Gastrocnemius medialis (tissue), 4 donors: ENCODE measurements at regions of chr17 and their contacts with region 1.

Region 1: DNA sequence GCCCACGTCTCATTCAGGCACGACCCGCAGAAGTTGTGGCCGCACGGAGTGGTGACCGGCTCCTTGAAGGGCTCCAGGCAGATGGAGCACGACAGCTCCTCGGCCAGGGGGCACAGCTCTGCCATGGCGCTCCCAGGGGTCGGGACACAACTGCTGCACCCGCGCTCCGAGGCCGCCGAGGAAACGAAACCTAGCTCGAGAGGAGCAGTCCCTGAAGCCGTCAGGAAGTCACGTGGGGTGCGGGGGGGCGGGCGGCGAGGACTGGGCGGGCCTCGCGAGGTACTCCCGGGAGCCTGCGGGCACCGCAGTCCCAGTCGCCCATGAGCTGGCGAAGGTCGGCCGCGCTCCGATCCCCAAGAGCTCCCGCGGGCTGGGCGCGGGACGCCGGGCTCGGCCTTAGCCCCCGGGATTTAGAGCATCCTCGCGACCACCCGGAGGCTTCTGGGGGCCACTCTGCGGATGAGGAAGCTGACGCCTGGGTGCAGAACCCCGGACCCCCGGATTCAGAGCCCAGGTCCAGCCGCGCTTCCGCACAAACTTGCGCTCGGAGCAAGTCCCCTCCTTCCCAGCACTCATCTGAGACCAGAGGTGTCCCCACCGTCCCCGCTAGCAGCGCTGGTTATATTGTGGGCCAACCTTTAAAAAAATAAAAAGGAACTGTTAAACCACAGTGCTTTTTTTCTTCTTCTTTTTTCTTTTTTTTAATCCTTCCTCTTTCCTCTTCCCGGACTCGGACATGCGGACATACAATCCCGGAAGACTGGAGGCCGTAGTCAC is at the start of gene TRIM25:
- DNase-seq: peak; percentile 92 to 93
- ATAC-seq: peak; percentile 78 to 84
- H3K4me3 ChIP-seq: peak within 1 kb of the TSS; percentile 68 to 87 (median 74)
- H3K27ac ChIP-seq: peak within 1 kb of the TSS; percentile 85 to 95 (median 87)
- H3K4me1 ChIP-seq: peaks cover 53 to 54% of the 10 kb centered on the region in 2 donors
- H3K27me3 ChIP-seq: no peaks in the 10 kb centered on the region
- CTCF ChIP-seq: no peak
- POLR2A ChIP-seq: peak; percentile 98 to 99
- total RNA-seq, gene TRIM25: 8.5 to 18.2 (median 15.1) TPM

Region 2: DNA sequence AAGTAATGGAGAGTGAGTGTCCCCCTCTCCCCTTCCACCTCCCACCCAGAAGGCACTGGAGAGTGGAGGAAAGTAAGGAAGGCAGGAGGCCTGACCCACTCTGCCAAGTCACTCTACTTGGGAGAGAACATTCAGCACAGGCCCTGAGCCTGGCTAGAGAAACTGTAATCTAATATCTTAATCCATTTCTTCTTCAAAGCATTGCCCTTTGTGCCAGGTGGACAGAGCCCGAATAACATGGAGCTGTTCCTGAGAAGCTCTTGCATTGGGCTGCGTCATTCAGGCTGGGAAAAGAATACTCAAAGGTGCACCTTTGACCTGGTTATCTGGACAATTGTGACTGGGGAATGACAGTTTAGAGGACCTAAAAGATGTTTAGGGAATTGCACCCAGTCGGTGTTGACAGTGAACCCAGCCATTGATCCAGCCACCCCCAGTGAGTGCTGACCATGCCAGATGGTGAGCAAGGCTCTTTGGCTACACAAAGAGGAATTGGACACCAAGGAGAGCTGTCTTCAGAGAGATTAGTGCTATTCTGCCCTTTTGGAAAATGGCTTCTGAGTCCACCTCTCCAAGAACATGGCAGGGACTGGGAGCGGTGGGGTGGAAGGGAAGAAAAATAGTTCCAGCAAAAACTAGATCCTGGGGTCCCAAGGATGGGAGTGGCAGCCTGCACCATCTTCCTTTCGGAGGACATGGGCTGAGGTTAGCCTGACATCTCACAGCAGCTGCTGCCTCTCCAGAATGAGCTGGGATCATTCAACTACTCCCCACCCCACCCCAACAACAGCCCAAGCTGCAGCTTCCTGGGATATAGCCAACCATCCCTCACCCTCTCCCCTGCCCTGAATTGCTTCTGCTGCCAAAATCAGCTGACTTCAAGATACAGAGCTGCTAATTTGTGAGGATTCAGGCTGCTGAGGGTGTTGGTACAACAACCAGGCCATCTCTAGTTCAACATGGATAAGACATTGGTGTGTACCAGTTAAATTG is 332.1 kb before region 1 on chr17:
- in situ Hi-C with region 1: no loop called
- intact Hi-C with region 1: no loop called
- DNase-seq: peak; percentile 67 to 80
- ATAC-seq: peak; percentile 89 to 93
- H3K4me3 ChIP-seq: no peak overlapping the region
- H3K27ac ChIP-seq: peak overlapping the region; percentile 83 to 92 (median 86)
- H3K4me1 ChIP-seq: peaks cover 40 to 53% of the 10 kb centered on the region in 2 donors
- H3K27me3 ChIP-seq: no peaks in the 10 kb centered on the region
- CTCF ChIP-seq: no peak
- POLR2A ChIP-seq: no peak

Region 3: DNA sequence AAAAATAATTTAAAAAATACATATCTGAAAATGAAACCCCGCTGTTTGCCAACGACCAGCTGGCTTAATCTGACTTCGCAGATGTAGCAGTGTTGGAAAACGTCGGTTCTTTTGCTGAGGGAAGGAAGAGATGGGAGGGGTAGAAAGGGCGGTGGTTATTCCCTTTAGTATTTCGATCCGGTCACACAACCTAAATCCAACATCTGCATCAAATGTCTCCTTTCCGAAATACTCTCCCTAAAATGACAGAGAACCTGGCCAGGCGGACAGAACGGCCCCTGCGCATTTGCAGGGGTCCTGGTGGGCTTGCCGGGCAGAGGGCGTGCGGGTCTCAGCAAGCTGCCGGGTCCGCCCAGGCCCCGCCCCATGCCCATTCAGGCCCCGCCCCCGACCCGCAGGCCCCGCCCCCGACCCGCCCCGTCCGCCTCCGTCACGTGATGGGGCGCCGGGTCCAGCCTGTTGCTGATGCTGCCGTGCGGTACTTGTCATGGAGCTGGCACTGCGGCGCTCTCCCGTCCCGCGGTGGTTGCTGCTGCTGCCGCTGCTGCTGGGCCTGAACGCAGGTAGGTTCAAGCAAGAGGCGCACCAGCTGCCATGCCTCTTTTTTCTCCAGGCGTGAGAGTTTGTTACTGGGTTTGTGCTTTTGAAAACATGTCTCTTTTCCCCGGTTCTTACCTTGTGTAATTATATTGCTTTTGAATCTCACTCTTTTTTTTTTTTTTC is 63.8 kb after region 1 on chr17 and contains the start of gene SCPEP1:
- in situ Hi-C with region 1: no loop called
- intact Hi-C with region 1: loop called (anchors 5 kb)
- DNase-seq: peak; percentile 86 to 87
- ATAC-seq: peak; percentile 89 to 92
- H3K4me3 ChIP-seq: peak within 1 kb of the TSS; percentile 65 to 79 (median 75)
- H3K27ac ChIP-seq: peak within 1 kb of the TSS; percentile 67 to 84 (median 76)
- H3K4me1 ChIP-seq: peaks cover 12% of the 10 kb centered on the region in 2 donors
- H3K27me3 ChIP-seq: no peaks in the 10 kb centered on the region
- CTCF ChIP-seq: no peak
- POLR2A ChIP-seq: peak; percentile 47 to 65
- total RNA-seq, gene SCPEP1: 9.9 to 44.7 (median 30.2) TPM